ENCODE measurements at regions of chr5 and their contacts with region 1.

Region 1: GRCh38 chr5:79857714-79858409 is 133.2 kb downstream of the MTX3 start:
- DNase-seq: peak; percentile 58 to 88 (median 78)
- H3K4me3 ChIP-seq: no peak overlapping the region
- H3K27ac ChIP-seq: peak overlapping the region in 15 of 59 donors; percentile 7 to 65 (median 39)
- H3K27me3 ChIP-seq: no peaks in the 10 kb centered on the region
- CTCF ChIP-seq: peak; percentile 89 to 99 (median 97)

Region 2: DNA sequence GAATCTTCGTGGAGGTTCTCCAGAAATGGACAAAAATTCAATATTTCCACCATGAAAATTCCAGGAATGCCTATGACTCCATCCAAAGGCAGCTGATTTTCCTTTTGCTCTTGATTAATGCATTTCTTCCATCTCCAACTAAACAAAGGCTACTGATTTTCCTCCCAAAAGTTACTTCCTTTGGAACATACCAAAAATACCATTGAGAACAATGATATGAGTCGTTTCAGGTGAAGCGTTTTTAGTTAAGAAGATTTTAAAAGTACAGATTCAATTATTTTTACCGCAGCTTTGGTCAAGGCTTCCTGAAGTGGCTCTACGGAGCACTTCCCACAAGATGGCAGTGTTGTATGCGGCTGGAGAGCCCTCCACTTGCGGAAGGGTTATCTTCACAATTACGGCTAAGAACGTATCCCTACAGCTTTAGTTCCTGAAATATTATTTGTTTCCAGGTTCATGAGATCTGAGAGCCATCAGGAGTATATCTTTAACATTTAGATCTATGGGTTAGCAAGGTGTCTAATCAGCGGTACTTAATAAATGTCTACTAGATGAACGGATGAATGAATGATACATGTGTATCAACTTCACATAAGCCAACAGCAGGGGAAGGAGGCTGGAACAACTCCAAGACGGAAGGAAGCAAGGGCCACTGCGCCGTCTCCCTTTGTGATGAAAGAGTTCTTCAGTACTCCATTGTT is 836.9 kb before region 1 on chr5:
- intact Hi-C with region 1: loop called in 1 of 2 experiments (anchors 5 kb)
- DNase-seq: peak; percentile 28 to 75 (median 63)
- H3K4me3 ChIP-seq: peak overlapping the region in 45 of 59 donors; percentile 3 to 57 (median 29)
- H3K27ac ChIP-seq: no peak overlapping the region
- H3K27me3 ChIP-seq: no peaks in the 10 kb centered on the region
- CTCF ChIP-seq: peak; percentile 55 to 94 (median 84)

Region 3: GRCh38 chr5:79702606-79703382 is 155.1 kb before region 1 on chr5:
- intact Hi-C with region 1: loop called (anchors 5 to 10 kb)
- DNase-seq: no peak
- H3K4me3 ChIP-seq: no peak overlapping the region
- H3K27ac ChIP-seq: no peak overlapping the region
- H3K27me3 ChIP-seq: no peaks in the 10 kb centered on the region
- CTCF ChIP-seq: peak; percentile 12 to 68 (median 46)

Region 4: DNA sequence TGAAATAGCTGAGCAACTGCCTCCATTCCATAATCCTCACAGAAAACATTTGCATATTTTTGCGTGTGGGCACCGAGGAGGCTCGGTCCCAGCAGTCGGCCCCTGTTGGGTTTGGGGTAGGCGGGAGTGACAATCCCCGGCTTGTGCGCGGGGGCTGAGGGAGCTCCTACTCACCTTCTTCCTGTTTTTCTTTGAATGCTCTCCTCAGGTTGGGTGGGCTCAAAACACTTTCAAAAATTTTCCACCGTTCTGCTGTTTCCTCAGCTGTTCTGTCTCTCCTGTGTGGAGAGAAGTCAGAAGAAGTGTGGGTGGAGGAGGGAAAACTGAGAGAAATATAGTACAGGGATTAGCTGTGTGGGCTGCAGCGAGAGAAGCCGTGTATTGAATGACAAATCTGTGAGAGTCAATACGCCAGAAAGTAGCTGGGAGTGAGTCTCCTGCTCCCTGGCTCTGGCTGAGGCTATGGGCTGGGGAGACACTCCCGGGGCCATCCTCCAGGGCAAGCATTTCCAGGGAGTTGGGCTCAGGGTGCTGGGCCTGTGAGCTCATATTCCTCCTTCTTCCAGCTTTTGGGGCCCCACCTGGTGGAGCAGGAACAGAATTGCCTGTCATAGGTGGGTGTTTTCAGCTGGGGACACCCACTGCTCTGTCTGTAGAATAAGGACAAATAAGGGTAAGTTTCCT is 83.5 kb before region 1 on chr5:
- intact Hi-C with region 1: loop called in 1 of 2 experiments (anchors 10 kb)
- DNase-seq: peak in 7 of 10 donors; percentile 26 to 76 (median 57)
- H3K4me3 ChIP-seq: peak overlapping the region in 3 of 59 donors; percentile 10 to 20 (median 11)
- H3K27ac ChIP-seq: peak overlapping the region in 37 of 59 donors; percentile 7 to 75 (median 52)
- H3K27me3 ChIP-seq: no peaks in the 10 kb centered on the region
- CTCF ChIP-seq: peak in 13 of 56 donors; percentile 8 to 40 (median 17)

Measured in dorsolateral prefrontal cortex (tissue), 120 donors.